Motor neuron (in vitro differentiated cells): ENCODE measurements at regions of chr1 and their contacts with region 1.

Region 1: GRCh38 chr1:113684153-113684541 is 75.1 kb downstream of the PHTF1 start:
- ATAC-seq: peak in 4 of 8 experiments; percentile 40 to 99 (median 91)
- H3K4me3 ChIP-seq: no peak overlapping the region
- H3K27ac ChIP-seq: no peak overlapping the region
- H3K4me1 ChIP-seq: no peaks in the 10 kb centered on the region

Region 2: DNA sequence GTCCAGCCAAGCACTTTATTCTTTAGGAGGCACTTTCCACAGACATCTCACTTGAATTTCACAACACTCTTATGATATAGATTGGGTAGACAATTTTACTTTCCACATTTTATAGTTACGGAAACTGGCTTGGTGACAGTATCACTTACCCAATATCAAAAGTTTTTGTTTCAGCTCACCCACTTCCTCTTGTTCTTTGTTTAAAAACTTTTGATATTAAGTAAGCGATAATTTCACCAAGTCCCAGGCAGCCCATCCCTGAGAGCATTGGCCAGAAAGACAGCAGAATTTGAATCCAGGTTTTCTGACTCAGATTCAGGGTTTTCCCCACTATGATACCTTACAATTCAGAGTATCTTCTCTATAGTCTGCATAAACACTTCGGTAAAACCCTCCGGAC is 551.1 kb before region 1 on chr1:
- in situ Hi-C with region 1: loop called in 6 of 9 experiments (anchors 10 to 25 kb)
- ATAC-seq: no peak
- H3K4me3 ChIP-seq: no peak overlapping the region
- H3K27ac ChIP-seq: no peak overlapping the region
- H3K4me1 ChIP-seq: peaks cover 3 to 5% of the 10 kb centered on the region in 2 donors

Region 3: DNA sequence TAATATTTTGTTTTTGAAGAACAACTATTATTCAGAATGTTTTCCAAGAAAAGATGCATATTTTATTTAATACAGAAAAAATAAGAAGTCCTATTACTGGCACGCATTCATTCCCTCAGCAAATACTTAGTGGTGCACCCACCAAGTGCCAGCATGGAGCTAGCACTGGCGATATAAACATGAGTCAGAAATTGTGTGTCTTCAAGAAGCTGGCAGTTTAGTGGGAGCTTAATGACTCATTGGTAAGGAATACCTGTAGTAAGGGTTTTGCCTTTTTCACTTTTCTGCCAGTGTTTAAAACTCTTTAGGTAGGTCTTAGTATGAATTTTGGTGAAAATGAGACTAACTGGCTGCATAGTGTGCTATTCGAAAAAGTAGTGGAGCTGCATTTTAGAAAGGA is 287.6 kb before region 1 on chr1:
- in situ Hi-C with region 1: no loop called
- ATAC-seq: no peak
- H3K4me3 ChIP-seq: no peak overlapping the region
- H3K27ac ChIP-seq: no peak overlapping the region
- H3K4me1 ChIP-seq: peaks cover 12 to 27% of the 10 kb centered on the region in 2 donors